ENCODE measurements at regions of chr16 and their contacts with region 1.

Region 1: GRCh38 chr16:57648590-57649442 is 19.3 kb upstream of the ADGRG3 start:
- DNase-seq: peak; percentile 70 to 88 (median 74)
- ATAC-seq: peak; percentile 25 to 68 (median 54)
- H3K4me3 ChIP-seq: no peak overlapping the region
- H3K27ac ChIP-seq: peak overlapping the region; percentile 71 to 93 (median 86)
- H3K4me1 ChIP-seq: peaks cover 0 to 41% (median 22%) of the 10 kb centered on the region in 12 donors
- H3K27me3 ChIP-seq: no peaks in the 10 kb centered on the region
- CTCF ChIP-seq: peak; percentile 99 to 100 (median 100)
- POLR2A ChIP-seq: no peak

Region 2: DNA sequence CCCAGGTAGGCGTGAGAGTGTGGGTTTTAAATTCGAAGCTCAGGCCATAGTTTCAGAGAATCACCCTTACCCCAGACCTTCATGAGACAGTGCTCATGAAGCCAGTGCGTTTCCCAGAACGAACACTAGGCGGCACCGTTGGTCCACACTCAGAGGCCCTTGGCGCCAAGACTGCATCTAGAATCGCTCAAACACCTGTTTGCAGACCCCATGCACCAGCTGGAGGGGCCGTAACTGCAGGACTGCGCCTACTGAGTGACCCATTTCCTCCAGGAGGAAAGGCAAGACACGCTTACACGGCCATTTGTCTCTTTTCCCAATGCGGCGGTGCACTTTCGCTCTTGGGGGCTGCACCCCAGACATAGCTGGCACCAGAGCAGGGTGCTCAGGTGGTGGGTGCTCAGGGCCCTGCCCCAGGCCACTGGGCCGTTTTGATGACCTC is 72.4 kb before region 1 on chr16:
- intact Hi-C with region 1: loop called in 1 of 10 experiments (anchors 5 kb)
- DNase-seq: peak; percentile 56 to 83 (median 68)
- ATAC-seq: peak; percentile 56 to 81 (median 78)
- H3K4me3 ChIP-seq: no peak overlapping the region
- H3K27ac ChIP-seq: peak overlapping the region in 1 of 12 donors; percentile 75
- H3K4me1 ChIP-seq: peaks cover 0 to 4% (median 0%) of the 10 kb centered on the region in 12 donors
- H3K27me3 ChIP-seq: peaks cover 0 to 17% (median 0%) of the 10 kb centered on the region in 9 donors
- CTCF ChIP-seq: peak; percentile 86 to 96 (median 93)
- POLR2A ChIP-seq: no peak

Region 3: DNA sequence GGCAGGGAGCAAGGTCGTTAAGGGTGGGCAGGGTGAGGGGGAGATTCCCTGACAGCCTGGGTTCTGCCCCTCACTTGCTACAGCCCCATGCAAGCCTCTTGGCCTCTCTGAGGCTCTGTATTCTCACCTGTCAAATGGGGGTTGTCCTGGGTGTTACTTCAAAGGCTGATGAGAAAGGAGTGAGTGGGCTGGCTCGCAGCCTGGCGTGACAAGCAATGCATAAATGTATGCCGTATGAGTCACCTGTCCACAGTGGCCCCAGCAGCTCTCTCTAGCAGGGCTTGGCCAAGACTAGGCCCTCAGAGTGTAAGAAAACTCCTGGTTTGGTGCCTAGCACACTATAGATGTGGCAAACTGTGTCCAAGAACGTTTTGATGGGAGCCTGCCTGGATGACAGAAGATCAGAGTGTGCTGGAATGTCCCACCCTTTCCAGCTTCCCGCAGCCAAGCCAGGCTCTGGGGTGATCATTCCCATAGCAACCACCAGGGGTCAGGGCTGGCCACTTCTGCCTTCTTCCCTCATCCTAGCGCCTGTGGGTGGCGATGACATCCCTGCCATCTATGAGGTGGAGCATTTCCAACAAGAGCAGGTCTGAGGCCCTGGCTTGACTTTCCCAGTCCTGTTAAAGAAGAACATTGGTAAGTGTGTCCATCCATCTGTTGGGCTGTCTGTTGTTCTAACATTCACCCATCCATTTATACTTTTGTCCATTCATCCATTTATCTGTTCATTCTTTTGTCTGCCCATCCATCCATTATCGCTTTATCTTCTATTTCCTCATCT is 57.5 kb before region 1 on chr16:
- intact Hi-C with region 1: loop called in 5 of 10 experiments (anchors 2 kb)
- DNase-seq: peak; percentile 70 to 81 (median 71)
- ATAC-seq: peak; percentile 90 to 97 (median 94)
- H3K4me3 ChIP-seq: no peak overlapping the region
- H3K27ac ChIP-seq: peak overlapping the region in 1 of 12 donors; percentile 3
- H3K4me1 ChIP-seq: peaks cover 0 to 25% (median 6%) of the 10 kb centered on the region in 12 donors
- H3K27me3 ChIP-seq: peaks cover 0 to 7% (median 0%) of the 10 kb centered on the region in 9 donors
- CTCF ChIP-seq: peak; percentile 83 to 95 (median 88)
- POLR2A ChIP-seq: no peak

Region 4: GRCh38 chr16:57600048-57600835 is 48.6 kb before region 1 on chr16:
- intact Hi-C with region 1: loop called (anchors 2 to 5 kb)
- DNase-seq: peak; percentile 33 to 80 (median 53)
- ATAC-seq: peak; percentile 58 to 92 (median 87)
- H3K4me3 ChIP-seq: no peak overlapping the region
- H3K27ac ChIP-seq: peak overlapping the region in 1 of 12 donors; percentile 78
- H3K4me1 ChIP-seq: peaks cover 0 to 35% (median 3%) of the 10 kb centered on the region in 12 donors
- H3K27me3 ChIP-seq: peaks cover 0 to 13% (median 0%) of the 10 kb centered on the region in 9 donors
- CTCF ChIP-seq: peak; percentile 56 to 83 (median 66)
- POLR2A ChIP-seq: no peak

Region 5: GRCh38 chr16:57609541-57610401 is 39.0 kb before region 1 on chr16:
- intact Hi-C with region 1: loop called in 4 of 10 experiments (anchors 5 kb)
- DNase-seq: peak in 4 of 5 donors; percentile 9 to 61 (median 38)
- ATAC-seq: peak; percentile 74 to 90 (median 84)
- H3K4me3 ChIP-seq: peak overlapping the region in 3 of 12 donors; percentile 12 to 22 (median 21)
- H3K27ac ChIP-seq: peak overlapping the region in 1 of 12 donors; percentile 62
- H3K4me1 ChIP-seq: peaks cover 0 to 19% (median 10%) of the 10 kb centered on the region in 12 donors
- H3K27me3 ChIP-seq: no peaks in the 10 kb centered on the region
- CTCF ChIP-seq: peak in 7 of 12 donors; percentile 12 to 52 (median 30)
- POLR2A ChIP-seq: no peak

Region 6: DNA sequence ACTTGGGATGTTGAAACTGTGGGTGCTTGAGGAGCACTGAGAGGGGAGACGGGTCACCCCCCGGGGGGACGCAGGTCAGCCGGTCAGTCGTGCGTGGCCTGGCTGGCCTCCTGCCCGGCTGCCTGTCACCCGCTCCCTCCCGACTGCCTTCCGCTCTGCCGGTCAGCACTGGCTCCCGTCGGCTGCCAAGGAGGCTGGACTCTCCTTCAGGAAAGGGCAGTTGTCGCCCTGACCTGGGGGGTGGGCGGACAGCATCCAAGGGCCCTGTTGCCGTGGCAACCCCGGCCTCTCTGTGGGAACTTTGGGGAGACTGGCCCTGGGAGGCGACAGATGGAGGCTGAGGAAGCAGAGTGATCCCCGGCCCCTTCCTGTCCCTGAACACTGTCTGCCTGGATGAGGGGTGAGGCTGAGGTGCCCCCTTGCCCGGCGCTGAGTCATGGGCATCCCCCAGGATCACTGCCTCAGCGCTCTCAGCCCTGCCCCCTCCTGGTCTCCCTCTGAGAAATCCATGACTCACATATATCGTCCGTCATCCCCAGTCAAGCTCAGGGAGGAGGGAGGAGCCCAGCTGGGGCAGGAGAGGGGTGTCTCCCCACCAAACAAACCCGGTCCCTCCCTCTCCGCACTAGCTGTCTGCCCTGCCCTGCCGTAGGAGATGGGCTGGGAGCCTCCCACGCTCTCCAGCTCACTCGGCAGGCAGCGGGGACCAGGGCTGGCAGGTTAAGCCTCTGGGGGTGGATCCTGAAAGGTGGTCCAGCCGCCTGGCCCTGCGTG is 20.6 kb before region 1 on chr16 and contains the start of gene ADGRG1:
- intact Hi-C with region 1: loop called in 3 of 10 experiments (anchors 1 to 2 kb)
- DNase-seq: peak; percentile 68 to 90 (median 80)
- ATAC-seq: peak; percentile 66 to 85 (median 84)
- H3K4me3 ChIP-seq: peak within 1 kb of the TSS; percentile 42 to 65 (median 59)
- H3K27ac ChIP-seq: peak within 1 kb of the TSS; percentile 70 to 93 (median 85)
- H3K4me1 ChIP-seq: peaks cover 4 to 47% (median 27%) of the 10 kb centered on the region in 12 donors
- H3K27me3 ChIP-seq: peaks cover 0 to 17% (median 0%) of the 10 kb centered on the region in 9 donors
- CTCF ChIP-seq: peak in 3 of 12 donors; percentile 15 to 40 (median 38)
- POLR2A ChIP-seq: peak in 1 of 2 donors; percentile 72
- total RNA-seq, gene ADGRG1: 15.2 to 65.2 (median 17.5) TPM

Region 7: GRCh38 chr16:57720142-57720575 is 71.3 kb after region 1 on chr16:
- intact Hi-C with region 1: loop called in 4 of 10 experiments (anchors 5 to 10 kb)
- DNase-seq: peak in 4 of 5 donors; percentile 42 to 52 (median 50)
- ATAC-seq: peak in 3 of 4 donors; percentile 75 to 87 (median 76)
- H3K4me3 ChIP-seq: no peak overlapping the region
- H3K27ac ChIP-seq: no peak overlapping the region
- H3K4me1 ChIP-seq: no peaks in the 10 kb centered on the region
- H3K27me3 ChIP-seq: peaks cover 0 to 5% (median 0%) of the 10 kb centered on the region in 9 donors
- CTCF ChIP-seq: peak; percentile 43 to 61 (median 54)
- POLR2A ChIP-seq: no peak